CD14-positive monocyte (primary cell): ENCODE measurements at regions of chr9 and their contacts with region 1.

Region 1: DNA sequence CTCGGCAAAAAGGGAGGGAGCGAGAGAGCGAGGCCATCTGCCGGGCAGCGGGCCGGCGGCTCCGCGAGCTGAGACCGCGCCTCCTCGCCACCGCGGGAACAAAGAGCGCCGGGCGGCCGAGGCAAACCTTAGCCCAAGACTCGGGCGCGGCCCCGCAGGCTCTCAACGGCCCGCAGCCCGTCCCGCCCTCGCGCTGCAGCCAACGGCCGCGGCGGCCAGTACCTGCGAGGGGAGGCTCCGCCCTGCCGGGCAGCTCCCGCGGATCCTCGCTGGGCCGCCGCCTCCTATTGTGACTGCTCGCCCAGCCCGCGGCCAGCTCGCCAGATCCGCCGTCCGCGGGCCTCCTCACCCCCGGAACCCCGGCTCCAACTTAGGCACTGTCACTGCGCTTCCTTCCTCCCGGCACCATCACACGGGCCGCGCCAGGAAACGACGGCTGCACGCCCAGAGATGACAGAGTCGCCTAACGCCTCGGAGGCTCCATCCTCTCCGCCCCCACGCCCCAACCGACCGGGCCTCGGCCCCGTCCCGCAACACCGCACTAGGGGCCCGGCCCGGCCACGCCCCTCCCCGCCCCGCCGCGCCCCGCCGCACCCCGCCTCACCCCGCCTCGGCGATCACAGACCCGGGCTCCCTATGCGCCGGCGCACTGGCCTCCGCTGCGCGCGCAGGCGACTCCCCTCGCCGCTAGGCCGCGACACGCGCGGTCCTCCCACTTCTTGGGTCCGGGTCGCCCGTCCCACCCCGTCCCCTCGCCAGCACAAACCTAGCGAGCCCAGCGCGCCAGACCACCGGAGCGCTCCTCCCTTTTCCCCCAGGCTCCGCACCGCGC is 479 bp upstream of the RNF38 start:
- DNase-seq: peak; percentile 81 to 86 (median 85)
- H3K4me3 ChIP-seq: peak overlapping the region; percentile 66 to 91 (median 84)
- H3K4me3 Mint-ChIP-seq: peak overlapping the region; percentile 90 to 91
- H3K27ac ChIP-seq: peak overlapping the region; percentile 75 to 91
- H3K27ac Mint-ChIP-seq: peak overlapping the region; percentile 88 to 97 (median 96)
- H3K4me1 ChIP-seq: peaks cover 24 to 25% of the 10 kb centered on the region in 2 donors
- H3K4me1 Mint-ChIP-seq: peaks cover 34% of the 10 kb centered on the region
- H3K27me3 ChIP-seq: no peaks in the 10 kb centered on the region
- H3K27me3 Mint-ChIP-seq: no peaks in the 10 kb centered on the region
- CTCF ChIP-seq: no peak

Region 2: GRCh38 chr9:36450110-36450732 is 49.7 kb after region 1 on chr9:
- intact Hi-C with region 1: no loop called
- DNase-seq: peak in 1 of 3 donors; percentile 12
- H3K4me3 ChIP-seq: no peak overlapping the region
- H3K4me3 Mint-ChIP-seq: no peak overlapping the region
- H3K27ac ChIP-seq: no peak overlapping the region
- H3K27ac Mint-ChIP-seq: peak overlapping the region in 1 of 7 donors; percentile 25
- H3K4me1 ChIP-seq: no peaks in the 10 kb centered on the region
- H3K4me1 Mint-ChIP-seq: peaks cover 4% of the 10 kb centered on the region
- H3K27me3 ChIP-seq: no peaks in the 10 kb centered on the region
- H3K27me3 Mint-ChIP-seq: peaks cover 0 to 1% (median 0%) of the 10 kb centered on the region in 3 donors
- CTCF ChIP-seq: peak; percentile 59

Region 3: DNA sequence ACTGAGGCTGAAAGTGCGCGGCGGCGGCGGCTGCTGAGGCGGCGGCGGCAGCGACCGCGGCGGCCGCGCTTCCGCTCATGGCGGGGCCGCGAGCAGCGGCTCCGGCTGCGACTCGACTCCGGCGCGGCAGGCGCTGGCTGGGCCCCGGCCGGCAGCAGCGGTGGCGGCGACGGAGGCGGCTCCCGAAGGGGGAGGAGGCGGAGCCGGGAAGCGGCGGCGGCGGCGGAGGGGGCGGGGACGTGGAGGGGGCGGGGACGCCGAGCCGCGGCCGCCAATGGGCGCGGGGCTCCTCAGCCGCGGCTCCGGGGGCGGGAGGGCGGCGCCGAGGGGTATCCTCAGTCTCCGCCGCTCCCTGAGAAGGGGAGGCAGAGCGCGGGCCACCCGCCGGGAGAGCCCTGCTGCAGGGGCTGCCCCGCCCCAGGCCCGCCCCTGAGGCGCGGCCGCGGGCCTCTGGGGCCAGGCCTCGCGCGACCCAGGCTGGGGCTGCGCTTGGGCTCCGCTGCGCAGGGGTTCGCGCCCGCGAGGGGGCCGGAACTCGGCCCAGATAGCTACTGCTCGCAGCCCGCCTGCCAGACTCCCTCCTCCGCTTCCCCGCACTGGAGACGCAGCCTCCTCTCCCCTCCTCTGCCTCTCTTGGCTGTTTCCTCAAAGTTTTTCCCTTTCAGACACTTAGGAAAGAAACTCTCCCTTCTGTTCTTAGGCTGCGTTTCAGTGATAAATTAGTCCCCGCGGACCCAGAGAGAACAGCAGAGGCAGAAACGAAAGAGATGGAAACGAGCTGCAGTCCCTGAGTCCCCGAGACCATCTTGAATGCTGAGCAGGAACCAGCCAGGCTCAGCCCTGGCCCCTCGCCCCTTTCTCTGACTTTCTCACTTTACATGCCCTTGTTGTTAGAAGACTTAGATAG is 87.2 kb after region 1 on chr9:
- intact Hi-C with region 1: loop called (anchors 2 to 5 kb)
- DNase-seq: peak; percentile 81 to 85 (median 82)
- H3K4me3 ChIP-seq: peak overlapping the region; percentile 60 to 98 (median 80)
- H3K4me3 Mint-ChIP-seq: peak overlapping the region; percentile 95
- H3K27ac ChIP-seq: peak overlapping the region; percentile 90 to 91
- H3K27ac Mint-ChIP-seq: peak overlapping the region; percentile 93 to 96 (median 94)
- H3K4me1 ChIP-seq: peaks cover 23 to 28% of the 10 kb centered on the region in 2 donors
- H3K4me1 Mint-ChIP-seq: peaks cover 37% of the 10 kb centered on the region
- H3K27me3 ChIP-seq: no peaks in the 10 kb centered on the region
- H3K27me3 Mint-ChIP-seq: peaks cover 0 to 4% (median 1%) of the 10 kb centered on the region in 3 donors
- CTCF ChIP-seq: no peak

Region 4: DNA sequence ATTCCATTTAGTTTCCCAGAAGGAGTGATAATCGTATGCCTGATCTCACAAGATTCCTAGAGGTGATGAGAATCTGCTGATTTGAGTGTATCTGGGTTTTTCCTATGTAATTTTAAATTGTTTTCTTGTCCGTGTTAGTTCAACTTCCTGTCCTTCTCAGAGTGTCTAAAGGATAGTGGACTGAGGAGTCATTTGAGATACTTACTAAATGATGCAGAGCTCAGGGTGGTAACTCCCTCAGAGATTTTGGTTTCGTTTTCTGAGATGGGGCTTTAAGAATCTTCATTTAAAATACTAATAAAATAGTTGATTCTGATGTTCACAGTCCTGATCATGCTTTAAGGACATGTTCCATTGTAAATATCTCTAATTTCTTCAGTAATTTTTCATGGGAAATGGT is 202.5 kb after region 1 on chr9:
- intact Hi-C with region 1: no loop called
- DNase-seq: no peak
- H3K4me3 ChIP-seq: no peak overlapping the region
- H3K4me3 Mint-ChIP-seq: no peak overlapping the region
- H3K27ac ChIP-seq: peak overlapping the region in 1 of 2 donors; percentile 3
- H3K27ac Mint-ChIP-seq: peak overlapping the region in 2 of 7 donors; percentile 41 to 79
- H3K4me1 ChIP-seq: no peaks in the 10 kb centered on the region
- H3K4me1 Mint-ChIP-seq: no peaks in the 10 kb centered on the region
- H3K27me3 ChIP-seq: no peaks in the 10 kb centered on the region
- H3K27me3 Mint-ChIP-seq: no peaks in the 10 kb centered on the region
- CTCF ChIP-seq: no peak

Region 5: DNA sequence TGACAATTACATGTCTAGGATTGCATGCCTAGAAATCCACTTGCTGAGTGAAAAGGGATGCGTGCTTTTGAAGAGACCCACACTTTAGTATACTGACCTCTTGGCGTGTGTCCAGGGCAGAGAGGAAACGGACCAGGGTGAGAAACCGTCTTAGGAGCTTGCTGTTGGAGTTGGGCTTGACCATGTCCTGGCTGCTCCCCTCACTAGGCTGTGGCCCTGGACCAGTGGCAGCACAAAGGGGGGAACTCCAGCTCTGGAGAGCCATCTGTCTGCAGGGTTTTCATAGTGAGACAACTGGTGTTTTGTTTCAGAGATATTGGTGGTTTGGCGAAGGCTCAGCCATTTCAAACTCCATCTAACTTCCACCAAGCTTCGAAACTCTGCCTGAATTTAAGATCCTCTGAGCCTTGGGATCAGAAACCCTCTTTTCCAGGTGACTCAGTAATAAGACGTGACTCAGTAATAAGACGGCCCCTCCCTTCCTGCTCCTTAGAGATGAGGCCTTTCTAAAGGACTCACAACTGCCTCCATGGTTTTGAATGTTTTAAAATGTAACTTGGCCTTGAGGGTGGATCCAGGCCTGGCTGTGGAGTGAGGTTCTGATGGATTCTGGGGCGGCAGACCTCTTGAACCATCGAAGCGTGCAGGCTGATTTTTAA is 337.9 kb after region 1 on chr9:
- intact Hi-C with region 1: no loop called
- DNase-seq: no peak
- H3K4me3 ChIP-seq: no peak overlapping the region
- H3K4me3 Mint-ChIP-seq: peak overlapping the region in 1 of 2 donors; percentile 35
- H3K27ac ChIP-seq: no peak overlapping the region
- H3K27ac Mint-ChIP-seq: no peak overlapping the region
- H3K4me1 ChIP-seq: no peaks in the 10 kb centered on the region
- H3K4me1 Mint-ChIP-seq: peaks cover 4% of the 10 kb centered on the region
- H3K27me3 ChIP-seq: peaks cover 25 to 35% of the 10 kb centered on the region in 2 donors
- H3K27me3 Mint-ChIP-seq: peaks cover 39 to 51% (median 40%) of the 10 kb centered on the region in 3 donors
- CTCF ChIP-seq: no peak